GM12878 (cell line): ENCODE measurements at regions of chr16 and their contacts with region 1.

Region 1: DNA sequence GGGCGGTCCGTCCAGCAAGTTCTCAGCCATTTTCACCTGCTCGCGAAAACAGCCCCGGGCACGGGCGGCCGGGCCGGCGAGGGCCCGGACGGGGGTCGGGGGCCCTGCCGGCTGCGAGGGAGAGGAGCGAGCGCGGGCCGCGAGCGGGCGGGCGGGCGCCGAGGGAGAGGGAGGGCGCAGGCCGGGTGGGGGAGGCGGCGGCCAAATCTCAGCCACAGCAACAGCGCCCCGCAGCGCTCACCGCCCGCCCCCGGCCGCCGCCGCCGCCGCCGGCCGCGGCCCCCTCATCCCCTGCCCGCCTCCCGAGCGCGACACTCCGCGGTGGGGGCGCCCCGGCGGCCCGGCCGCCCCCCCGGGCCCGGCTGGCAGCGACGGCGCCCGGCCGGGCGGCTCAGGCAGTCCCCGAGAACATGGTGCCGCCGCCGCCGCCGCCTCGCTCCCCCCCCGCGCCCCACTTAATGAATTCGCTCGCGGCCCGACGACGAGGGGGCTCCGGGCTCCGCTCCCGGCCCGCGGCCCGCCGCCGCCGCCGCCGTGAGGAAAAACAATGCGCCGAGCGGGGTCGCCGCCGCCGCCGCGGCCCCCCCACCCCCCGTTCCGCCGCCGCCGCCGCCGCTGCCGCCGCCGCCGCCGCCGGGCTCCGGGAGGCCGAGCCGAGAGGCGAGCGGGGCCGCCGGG is 487 bp downstream of the CREBBP start:
- DNase-seq: no peak
- ATAC-seq: peak; percentile 71
- H3K4me3 ChIP-seq: peak overlapping the region; percentile 80
- H3K27ac ChIP-seq: peak overlapping the region; percentile 60
- H3K4me1 ChIP-seq: peaks cover 11% of the 10 kb centered on the region
- H3K27me3 ChIP-seq: no peaks in the 10 kb centered on the region
- CTCF ChIP-seq: peak in 2 of 3 experiments; percentile 7 to 43; a peak in 2 of 6 replicates
- EP300 ChIP-seq: no peak
- POLR2A ChIP-seq: peak; percentile 24; the same call in 1 of the 2 replicates
- RAD21 ChIP-seq: 0 out of 2 replicates have a peak, but pooled peaks have one; percentile 24

Region 2: GRCh38 chr16:3664136-3664896 is 215.7 kb before region 1 on chr16:
- CTCF ChIA-PET with region 1: no interaction called
- POLR2A ChIA-PET with region 1: no interaction called
- RAD21 ChIA-PET with region 1: no interaction called
- SMC1A ChIA-PET with region 1: no interaction called
- in situ Hi-C with region 1: no loop called
- intact Hi-C with region 1: no loop called
- DNase-seq: no peak
- ATAC-seq: no peak
- H3K4me3 ChIP-seq: no peak overlapping the region
- H3K27ac ChIP-seq: no peak overlapping the region
- H3K4me1 ChIP-seq: no peaks in the 10 kb centered on the region
- H3K27me3 ChIP-seq: no peaks in the 10 kb centered on the region
- CTCF ChIP-seq: no peak
- EP300 ChIP-seq: no peak
- POLR2A ChIP-seq: no peak
- RAD21 ChIP-seq: no peak

Region 3: DNA sequence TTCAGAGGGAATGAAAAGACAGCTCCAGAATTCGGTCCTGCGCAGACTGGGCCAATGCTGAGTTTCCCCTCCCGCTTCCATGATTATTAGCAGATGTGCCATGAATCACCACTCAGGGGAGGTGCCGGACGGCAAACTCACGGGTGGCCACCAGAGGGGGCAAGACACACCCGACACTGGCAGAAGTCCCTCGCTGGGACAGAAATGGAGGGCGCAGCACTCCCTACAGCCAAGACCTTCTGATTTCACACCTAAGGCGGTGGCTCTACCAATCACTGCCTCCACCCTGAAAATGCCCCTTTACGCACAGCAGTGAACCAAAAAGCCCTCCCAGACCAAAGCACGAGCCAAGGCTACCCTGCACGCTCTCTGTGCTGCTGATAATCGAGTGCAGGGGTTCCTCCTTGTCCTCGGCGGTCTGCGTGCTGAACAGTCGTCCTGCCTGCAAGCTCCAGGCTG is 189.5 kb before region 1 on chr16:
- CTCF ChIA-PET with region 1: interaction called, 16 read pairs
- POLR2A ChIA-PET with region 1: no interaction called
- RAD21 ChIA-PET with region 1: interaction called, 6 read pairs
- SMC1A ChIA-PET with region 1: interaction called, 9 read pairs
- in situ Hi-C with region 1: loop called (anchors 5 kb)
- intact Hi-C with region 1: loop called (anchors 2 kb)
- DNase-seq: peak; percentile 21
- ATAC-seq: peak; percentile 100
- H3K4me3 ChIP-seq: no peak overlapping the region
- H3K27ac ChIP-seq: no peak overlapping the region
- H3K4me1 ChIP-seq: peaks cover 5% of the 10 kb centered on the region; the same call in 1 of the 2 replicates
- H3K27me3 ChIP-seq: no peaks in the 10 kb centered on the region
- CTCF ChIP-seq: peak; percentile 88 to 94 (median 91); a peak in 5 of 6 replicates
- EP300 ChIP-seq: no peak
- POLR2A ChIP-seq: no peak
- RAD21 ChIP-seq: peak; percentile 72

Region 4: GRCh38 chr16:3734758-3735221 is 145.2 kb before region 1 on chr16:
- CTCF ChIA-PET with region 1: no interaction called
- POLR2A ChIA-PET with region 1: no interaction called
- RAD21 ChIA-PET with region 1: no interaction called
- SMC1A ChIA-PET with region 1: no interaction called
- in situ Hi-C with region 1: no loop called
- intact Hi-C with region 1: no loop called
- DNase-seq: no peak
- ATAC-seq: no peak
- H3K4me3 ChIP-seq: no peak overlapping the region
- H3K27ac ChIP-seq: no peak overlapping the region
- H3K4me1 ChIP-seq: no peaks in the 10 kb centered on the region
- H3K27me3 ChIP-seq: no peaks in the 10 kb centered on the region
- CTCF ChIP-seq: no peak
- EP300 ChIP-seq: no peak
- POLR2A ChIP-seq: no peak; the same call in 1 of the 2 replicates
- RAD21 ChIP-seq: no peak

Region 5: DNA sequence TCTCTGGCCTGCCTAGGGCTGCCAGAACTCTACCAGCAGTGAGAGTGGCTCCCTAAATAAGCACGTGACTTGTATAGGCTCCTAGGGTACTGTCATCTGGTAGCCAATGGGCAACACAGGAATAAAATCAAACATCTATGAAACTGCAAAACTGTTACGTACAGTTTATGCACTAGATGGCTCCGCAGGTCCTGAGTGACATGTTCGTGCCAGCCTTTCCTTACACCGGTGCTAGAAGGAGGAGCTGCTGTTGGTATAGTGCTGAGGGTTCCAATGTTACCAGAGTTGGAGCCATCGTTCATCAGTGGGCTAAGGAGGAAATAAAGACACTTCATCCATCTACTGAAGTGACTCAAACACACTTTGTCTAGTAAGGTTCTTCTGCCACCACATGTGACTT is 99.5 kb before region 1 on chr16:
- CTCF ChIA-PET with region 1: interaction called, 11 read pairs
- POLR2A ChIA-PET with region 1: interaction called, 3 read pairs
- RAD21 ChIA-PET with region 1: interaction called, 26 read pairs
- SMC1A ChIA-PET with region 1: interaction called, 7 read pairs
- in situ Hi-C with region 1: no loop called
- intact Hi-C with region 1: loop called (anchors 5 kb)
- DNase-seq: no peak
- ATAC-seq: peak; percentile 65
- H3K4me3 ChIP-seq: no peak overlapping the region
- H3K27ac ChIP-seq: no peak overlapping the region
- H3K4me1 ChIP-seq: no peaks in the 10 kb centered on the region
- H3K27me3 ChIP-seq: no peaks in the 10 kb centered on the region
- CTCF ChIP-seq: peak in 2 of 3 experiments; percentile 27 to 43; a peak in 2 of 6 replicates
- EP300 ChIP-seq: no peak
- POLR2A ChIP-seq: no peak
- RAD21 ChIP-seq: peak; percentile 40; the same call in 1 of the 2 replicates

Region 6: DNA sequence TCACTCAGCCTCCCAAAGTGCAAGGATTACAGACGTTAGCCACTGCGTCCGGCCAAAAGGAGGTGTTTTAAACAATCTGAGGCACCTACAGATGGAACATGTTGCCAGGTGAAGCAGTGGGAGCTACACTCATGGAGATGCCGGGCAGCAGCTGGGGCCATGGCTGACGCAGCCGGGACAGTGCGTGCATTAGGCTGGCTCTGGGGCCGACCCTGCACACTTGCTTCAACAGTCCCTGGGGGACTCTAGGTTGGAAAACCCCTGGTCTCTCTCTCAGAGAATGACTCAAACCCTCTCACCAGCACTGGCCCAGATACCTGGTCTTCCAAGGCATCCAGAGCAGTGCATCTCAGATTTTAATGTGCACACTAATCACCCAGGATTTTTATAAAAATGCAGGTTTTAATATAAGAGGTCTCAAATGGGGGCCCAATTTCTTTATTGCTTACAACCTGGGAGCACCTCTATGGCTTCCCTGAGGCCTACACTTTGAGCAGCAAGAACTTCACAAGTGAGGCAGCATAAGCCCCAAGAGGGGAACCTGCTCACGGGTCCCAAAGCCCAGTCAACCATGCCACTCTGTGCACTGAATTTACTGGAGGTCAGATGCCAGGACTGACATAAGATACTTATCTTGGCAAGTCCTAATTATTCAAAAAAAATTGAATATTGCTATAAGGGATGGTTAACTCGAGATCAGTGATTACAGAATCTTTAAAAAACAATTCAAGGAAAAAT is 91.9 kb before region 1 on chr16:
- CTCF ChIA-PET with region 1: interaction called, 9 read pairs
- POLR2A ChIA-PET with region 1: interaction called, 4 read pairs
- RAD21 ChIA-PET with region 1: interaction called, 9 read pairs
- SMC1A ChIA-PET with region 1: interaction called, 15 read pairs
- in situ Hi-C with region 1: no loop called
- intact Hi-C with region 1: loop called (anchors 5 kb)
- DNase-seq: peak; percentile 55
- ATAC-seq: peak; percentile 93
- H3K4me3 ChIP-seq: no peak overlapping the region
- H3K27ac ChIP-seq: peak overlapping the region; percentile 47
- H3K4me1 ChIP-seq: peaks cover 29% of the 10 kb centered on the region
- H3K27me3 ChIP-seq: no peaks in the 10 kb centered on the region
- CTCF ChIP-seq: no peak
- EP300 ChIP-seq: peak; percentile 82 to 86
- POLR2A ChIP-seq: no peak
- RAD21 ChIP-seq: no peak

Region 7: DNA sequence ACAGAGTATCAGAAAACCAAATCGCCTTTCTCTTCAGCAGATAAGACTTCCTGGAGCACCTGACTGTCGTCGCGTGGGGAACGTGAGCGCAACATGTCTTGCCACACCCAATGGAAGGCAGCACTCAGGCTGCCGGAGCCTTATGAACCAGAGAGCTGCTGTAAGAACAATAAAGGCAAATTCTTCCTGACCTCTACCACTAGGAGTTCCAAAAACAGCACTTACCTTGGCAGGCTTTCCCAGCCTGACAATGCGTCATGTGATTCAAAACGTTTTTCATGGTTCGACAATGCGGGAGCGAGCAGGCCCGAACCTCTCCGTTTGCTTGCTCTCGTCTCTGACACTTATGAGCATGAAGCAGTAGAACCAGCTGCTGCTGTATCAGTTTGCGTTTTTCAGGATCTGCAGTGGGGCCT is 86.9 kb before region 1 on chr16:
- CTCF ChIA-PET with region 1: interaction called, 15 read pairs
- POLR2A ChIA-PET with region 1: interaction called, 10 read pairs
- RAD21 ChIA-PET with region 1: interaction called, 14 read pairs
- SMC1A ChIA-PET with region 1: interaction called, 19 read pairs
- in situ Hi-C with region 1: no loop called
- intact Hi-C with region 1: loop called (anchors 5 kb)
- DNase-seq: no peak
- ATAC-seq: no peak
- H3K4me3 ChIP-seq: no peak overlapping the region
- H3K27ac ChIP-seq: no peak overlapping the region
- H3K4me1 ChIP-seq: peaks cover 35% of the 10 kb centered on the region
- H3K27me3 ChIP-seq: no peaks in the 10 kb centered on the region
- CTCF ChIP-seq: no peak
- EP300 ChIP-seq: no peak
- POLR2A ChIP-seq: no peak
- RAD21 ChIP-seq: no peak

Region 8: GRCh38 chr16:3857189-3858043 is 22.6 kb before region 1 on chr16:
- CTCF ChIA-PET with region 1: interaction called, 35 read pairs
- POLR2A ChIA-PET with region 1: interaction called, 22 read pairs
- RAD21 ChIA-PET with region 1: interaction called, 49 read pairs
- SMC1A ChIA-PET with region 1: interaction called, 160 read pairs
- in situ Hi-C with region 1: no loop called
- intact Hi-C with region 1: no loop called
- DNase-seq: peak; percentile 42
- ATAC-seq: peak; percentile 65
- H3K4me3 ChIP-seq: 0 out of 2 replicates have a peak overlapping the region, but pooled peaks have one; percentile 29
- H3K27ac ChIP-seq: peak overlapping the region; percentile 60
- H3K4me1 ChIP-seq: peaks cover 62% of the 10 kb centered on the region
- H3K27me3 ChIP-seq: no peaks in the 10 kb centered on the region
- CTCF ChIP-seq: no peak
- EP300 ChIP-seq: peak in 1 of 2 experiments; percentile 68; a peak in 2 of 4 replicates
- POLR2A ChIP-seq: no peak
- RAD21 ChIP-seq: no peak

Region 9: GRCh38 chr16:3907586-3907985 is 27.6 kb after region 1 on chr16:
- CTCF ChIA-PET with region 1: no interaction called
- POLR2A ChIA-PET with region 1: no interaction called
- RAD21 ChIA-PET with region 1: no interaction called
- SMC1A ChIA-PET with region 1: no interaction called
- in situ Hi-C with region 1: no loop called
- intact Hi-C with region 1: no loop called
- DNase-seq: no peak
- ATAC-seq: no peak
- H3K4me3 ChIP-seq: no peak overlapping the region
- H3K27ac ChIP-seq: no peak overlapping the region
- H3K4me1 ChIP-seq: no peaks in the 10 kb centered on the region
- H3K27me3 ChIP-seq: no peaks in the 10 kb centered on the region; a peak in 1 of 4 replicates
- CTCF ChIP-seq: no peak
- EP300 ChIP-seq: no peak
- POLR2A ChIP-seq: no peak
- RAD21 ChIP-seq: no peak